Naive thymus-derived CD4-positive, alpha-beta T cell (primary cell): ENCODE measurements at regions of chr16 and their contacts with region 1.

Region 1: DNA sequence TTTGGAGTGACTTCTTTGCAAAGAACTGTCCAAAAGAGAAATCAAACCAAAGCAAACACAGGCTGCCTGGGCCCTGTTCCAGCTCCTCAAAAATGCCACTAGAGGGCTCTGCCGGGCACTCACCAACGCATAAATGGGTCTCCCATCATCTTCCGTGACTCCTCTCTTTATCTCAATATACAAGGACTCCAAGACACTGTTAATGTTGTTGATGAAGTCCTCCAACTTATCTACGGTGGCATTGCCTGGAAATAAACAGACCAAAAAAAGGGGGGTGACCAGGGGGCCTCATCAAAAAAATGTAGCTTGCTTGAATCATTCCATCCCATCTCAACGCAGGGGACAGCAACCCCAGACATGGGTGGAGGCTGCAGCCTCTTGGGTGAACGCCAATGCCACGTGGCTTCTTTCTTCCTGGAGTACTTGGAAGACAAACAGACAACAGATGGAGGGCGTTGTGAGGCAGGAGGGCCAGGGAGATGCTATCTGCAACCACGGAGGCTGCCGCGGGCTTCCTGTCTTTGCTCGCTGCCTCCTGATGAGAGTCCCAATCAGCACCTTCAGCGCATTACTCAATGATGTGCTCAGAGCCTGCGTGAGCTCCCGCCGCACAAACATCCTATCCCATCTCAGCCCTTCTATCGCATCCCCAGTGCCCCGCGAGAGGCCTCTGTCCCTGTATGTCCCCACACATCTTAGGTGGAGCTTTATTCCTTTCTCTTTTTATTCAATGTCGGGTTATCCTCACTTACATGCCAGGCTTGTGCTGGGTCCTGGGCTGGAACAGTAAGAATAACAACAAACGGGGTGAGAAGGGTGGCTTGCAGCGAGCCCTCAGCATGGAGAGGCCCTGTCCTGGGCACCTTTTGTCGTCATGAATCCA is 32.0 kb downstream of the KDM8 start:
- DNase-seq: peak; percentile 61 to 97 (median 96)
- ATAC-seq: peak; percentile 82
- H3K4me3 ChIP-seq: peak overlapping the region; percentile 29
- H3K4me3 Mint-ChIP-seq: peak overlapping the region; percentile 77 to 88 (median 84)
- H3K27ac ChIP-seq: peak overlapping the region; percentile 97
- H3K27ac Mint-ChIP-seq: peak overlapping the region; percentile 91 to 100 (median 99)
- H3K4me1 ChIP-seq: peaks cover 82 to 84% of the 10 kb centered on the region in 2 donors
- H3K4me1 Mint-ChIP-seq: peaks cover 70 to 98% (median 90%) of the 10 kb centered on the region in 7 donors
- H3K27me3 ChIP-seq: no peaks in the 10 kb centered on the region
- H3K27me3 Mint-ChIP-seq: no peaks in the 10 kb centered on the region

Region 2: GRCh38 chr16:26334218-26335111 is 900.8 kb before region 1 on chr16:
- CTCF ChIA-PET with region 1: no interaction called
- POLR2A ChIA-PET with region 1: no interaction called
- intact Hi-C with region 1: no loop called
- DNase-seq: no peak
- ATAC-seq: no peak
- H3K4me3 ChIP-seq: no peak overlapping the region
- H3K4me3 Mint-ChIP-seq: no peak overlapping the region
- H3K27ac ChIP-seq: no peak overlapping the region
- H3K27ac Mint-ChIP-seq: no peak overlapping the region
- H3K4me1 ChIP-seq: no peaks in the 10 kb centered on the region
- H3K4me1 Mint-ChIP-seq: peaks cover 0 to 9% (median 0%) of the 10 kb centered on the region in 7 donors
- H3K27me3 ChIP-seq: no peaks in the 10 kb centered on the region
- H3K27me3 Mint-ChIP-seq: peaks cover 3 to 24% (median 13%) of the 10 kb centered on the region in 5 donors

Region 3: GRCh38 chr16:27195941-27196595 is 39.2 kb before region 1 on chr16:
- CTCF ChIA-PET with region 1: interaction called, 18 read pairs
- POLR2A ChIA-PET with region 1: interaction called, 128 read pairs
- intact Hi-C with region 1: loop called in 1 of 2 experiments (anchors 1 kb)
- DNase-seq: peak in 7 of 9 donors; percentile 82 to 93 (median 90)
- ATAC-seq: peak; percentile 96
- H3K4me3 ChIP-seq: peak overlapping the region; percentile 41
- H3K4me3 Mint-ChIP-seq: peak overlapping the region; percentile 58 to 80 (median 72)
- H3K27ac ChIP-seq: peak overlapping the region; percentile 73
- H3K27ac Mint-ChIP-seq: peak overlapping the region; percentile 80 to 99 (median 95)
- H3K4me1 ChIP-seq: peaks cover 46 to 70% of the 10 kb centered on the region in 2 donors
- H3K4me1 Mint-ChIP-seq: peaks cover 52 to 83% (median 78%) of the 10 kb centered on the region in 7 donors
- H3K27me3 ChIP-seq: no peaks in the 10 kb centered on the region
- H3K27me3 Mint-ChIP-seq: no peaks in the 10 kb centered on the region

Region 4: DNA sequence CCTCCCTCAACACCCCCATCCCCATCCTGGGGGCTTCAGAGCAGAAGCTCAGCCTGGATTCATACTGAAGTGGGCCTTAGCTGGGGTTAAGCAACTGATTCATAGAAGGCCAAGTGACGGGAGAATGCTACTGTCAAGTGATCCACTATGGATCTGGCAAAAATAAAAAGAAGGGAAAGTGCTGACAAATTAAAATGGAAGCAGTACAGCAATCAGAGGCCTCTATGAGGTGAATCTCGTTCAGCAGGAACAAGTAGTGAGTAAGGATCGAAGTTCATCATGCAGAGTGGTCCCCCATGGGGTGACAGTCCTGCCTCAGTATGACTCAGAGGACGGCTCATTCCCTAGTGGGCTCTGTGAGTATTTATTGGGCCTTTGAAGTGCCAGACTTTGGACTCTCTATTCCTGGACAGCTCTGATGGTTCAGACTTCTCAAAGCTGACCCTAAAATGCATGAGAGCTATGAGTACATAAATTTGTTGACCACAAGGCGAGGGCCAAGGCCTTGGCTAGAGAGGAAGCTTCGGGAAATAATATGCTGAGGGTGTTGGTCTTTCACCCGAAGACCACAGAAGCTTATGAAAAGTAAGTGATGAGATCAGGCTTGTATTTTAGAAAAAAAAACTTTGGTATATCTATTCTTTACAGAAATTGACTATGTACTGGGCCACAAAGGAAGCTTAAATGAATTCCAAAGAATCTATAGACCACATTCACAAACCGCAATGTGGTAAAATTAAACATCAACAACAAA is 38.6 kb after region 1 on chr16:
- CTCF ChIA-PET with region 1: interaction called, 12 read pairs
- POLR2A ChIA-PET with region 1: interaction called, 20 read pairs
- intact Hi-C with region 1: loop called in 1 of 2 experiments (anchors 1 kb)
- DNase-seq: peak in 7 of 9 donors; percentile 44 to 75 (median 56)
- ATAC-seq: peak; percentile 79
- H3K4me3 ChIP-seq: peak overlapping the region; percentile 15
- H3K4me3 Mint-ChIP-seq: peak overlapping the region; percentile 49 to 88 (median 74)
- H3K27ac ChIP-seq: peak overlapping the region; percentile 63
- H3K27ac Mint-ChIP-seq: peak overlapping the region; percentile 48 to 95 (median 88)
- H3K4me1 ChIP-seq: peaks cover 9 to 30% of the 10 kb centered on the region in 2 donors
- H3K4me1 Mint-ChIP-seq: peaks cover 25 to 77% (median 65%) of the 10 kb centered on the region in 7 donors
- H3K27me3 ChIP-seq: no peaks in the 10 kb centered on the region
- H3K27me3 Mint-ChIP-seq: peaks cover 0 to 4% (median 0%) of the 10 kb centered on the region in 5 donors

Region 5: DNA sequence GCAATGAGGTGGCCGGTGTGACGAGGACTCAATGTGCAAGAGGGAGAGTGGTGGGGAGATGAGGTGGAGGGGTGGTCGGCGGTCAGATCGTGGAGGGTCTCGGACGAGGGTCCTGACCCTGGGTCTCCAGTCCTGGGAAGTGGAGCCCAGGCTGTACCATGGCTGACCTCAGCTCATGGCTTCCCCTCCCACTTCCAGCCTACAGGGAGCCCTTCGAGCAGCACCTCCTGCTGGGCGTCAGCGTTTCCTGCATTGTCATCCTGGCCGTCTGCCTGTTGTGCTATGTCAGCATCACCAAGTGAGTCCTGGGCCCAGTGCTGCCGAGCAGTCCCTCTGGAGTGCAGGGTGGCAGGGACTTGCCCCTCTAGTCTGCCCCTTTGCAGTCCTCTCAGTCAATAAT is 120.3 kb after region 1 on chr16:
- CTCF ChIA-PET with region 1: interaction called, 15 read pairs
- POLR2A ChIA-PET with region 1: interaction called, 6 read pairs
- intact Hi-C with region 1: loop called in 1 of 2 experiments (anchors 1 kb)
- DNase-seq: peak in 6 of 9 donors; percentile 25 to 44 (median 37)
- ATAC-seq: peak; percentile 80
- H3K4me3 ChIP-seq: no peak overlapping the region
- H3K4me3 Mint-ChIP-seq: no peak overlapping the region
- H3K27ac ChIP-seq: peak overlapping the region; percentile 29
- H3K27ac Mint-ChIP-seq: peak overlapping the region; percentile 1 to 93 (median 77)
- H3K4me1 ChIP-seq: no peaks in the 10 kb centered on the region
- H3K4me1 Mint-ChIP-seq: peaks cover 13 to 37% (median 25%) of the 10 kb centered on the region in 7 donors
- H3K27me3 ChIP-seq: no peaks in the 10 kb centered on the region
- H3K27me3 Mint-ChIP-seq: no peaks in the 10 kb centered on the region

Region 6: GRCh38 chr16:27449434-27450195 is 214.3 kb after region 1 on chr16:
- CTCF ChIA-PET with region 1: interaction called, 8 read pairs
- POLR2A ChIA-PET with region 1: interaction called, 7 read pairs
- intact Hi-C with region 1: loop called in 1 of 2 experiments (anchors 1 kb)
- DNase-seq: peak in 6 of 9 donors; percentile 27 to 73 (median 40)
- ATAC-seq: peak; percentile 79
- H3K4me3 ChIP-seq: no peak overlapping the region
- H3K4me3 Mint-ChIP-seq: peak overlapping the region; percentile 16 to 66 (median 42)
- H3K27ac ChIP-seq: peak overlapping the region; percentile 57
- H3K27ac Mint-ChIP-seq: peak overlapping the region; percentile 66 to 93 (median 85)
- H3K4me1 ChIP-seq: peaks cover 48 to 67% of the 10 kb centered on the region in 2 donors
- H3K4me1 Mint-ChIP-seq: peaks cover 52 to 91% (median 66%) of the 10 kb centered on the region in 7 donors
- H3K27me3 ChIP-seq: no peaks in the 10 kb centered on the region
- H3K27me3 Mint-ChIP-seq: no peaks in the 10 kb centered on the region

Region 7: GRCh38 chr16:28846080-28846932 is 1611.0 kb after region 1 on chr16 and contains the start of gene TUFM:
- CTCF ChIA-PET with region 1: no interaction called
- POLR2A ChIA-PET with region 1: no interaction called
- intact Hi-C with region 1: loop called in 1 of 2 experiments (anchors 5 kb)
- DNase-seq: peak; percentile 88 to 99 (median 98)
- ATAC-seq: peak; percentile 98
- H3K4me3 ChIP-seq: peak within 1 kb of the TSS; percentile 88
- H3K4me3 Mint-ChIP-seq: peak within 1 kb of the TSS; percentile 91 to 98 (median 96)
- H3K27ac ChIP-seq: peak within 1 kb of the TSS; percentile 94
- H3K27ac Mint-ChIP-seq: peak within 1 kb of the TSS; percentile 91 to 98 (median 94)
- H3K4me1 ChIP-seq: peaks cover 19 to 25% of the 10 kb centered on the region in 2 donors
- H3K4me1 Mint-ChIP-seq: peaks cover 17 to 38% (median 27%) of the 10 kb centered on the region in 7 donors
- H3K27me3 ChIP-seq: no peaks in the 10 kb centered on the region
- H3K27me3 Mint-ChIP-seq: no peaks in the 10 kb centered on the region
- total RNA-seq, gene TUFM: 89.7 to 140 (median 95.2) TPM